HepG2 (cell line): ENCODE measurements at regions of chr11 and their contacts with region 1.

Region 1: DNA sequence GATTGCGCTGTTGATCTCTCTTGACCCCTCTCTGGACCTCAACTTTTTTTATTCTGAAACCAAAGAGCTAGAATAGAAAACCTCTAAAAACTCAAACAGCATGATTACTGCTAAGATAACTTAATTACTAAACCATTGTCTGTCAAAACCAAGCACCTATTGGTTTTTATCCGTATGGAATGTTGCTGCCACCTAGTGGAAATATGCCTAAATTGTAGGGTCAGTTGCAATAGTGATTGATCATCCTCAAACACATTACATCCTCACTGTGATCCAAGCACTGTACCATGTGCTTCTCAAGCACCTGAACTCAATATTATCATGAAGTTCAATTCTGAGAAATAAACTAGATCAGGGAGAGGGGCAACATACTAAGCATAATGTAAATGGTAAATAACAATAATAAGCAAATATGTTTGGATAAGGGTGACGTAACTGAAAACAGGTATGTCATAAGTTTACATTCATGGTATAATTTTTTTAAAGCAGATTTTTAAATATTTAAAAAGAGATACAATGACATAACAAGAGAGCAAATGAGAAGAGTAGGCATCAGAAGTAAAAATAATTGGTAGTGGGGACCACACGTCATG is 3.8 kb upstream of the OR5A2 start:
- DNase-seq: peak; percentile 53
- ATAC-seq: peak; percentile 73
- H3K4me3 ChIP-seq: no peak overlapping the region
- H3K27ac ChIP-seq: no peak overlapping the region
- H3K4me1 ChIP-seq: no peaks in the 10 kb centered on the region
- H3K27me3 ChIP-seq: no peaks in the 10 kb centered on the region
- CTCF ChIP-seq: peak; percentile 79
- EP300 ChIP-seq: no peak
- POLR2A ChIP-seq: no peak
- RAD21 ChIP-seq: no peak

Region 2: DNA sequence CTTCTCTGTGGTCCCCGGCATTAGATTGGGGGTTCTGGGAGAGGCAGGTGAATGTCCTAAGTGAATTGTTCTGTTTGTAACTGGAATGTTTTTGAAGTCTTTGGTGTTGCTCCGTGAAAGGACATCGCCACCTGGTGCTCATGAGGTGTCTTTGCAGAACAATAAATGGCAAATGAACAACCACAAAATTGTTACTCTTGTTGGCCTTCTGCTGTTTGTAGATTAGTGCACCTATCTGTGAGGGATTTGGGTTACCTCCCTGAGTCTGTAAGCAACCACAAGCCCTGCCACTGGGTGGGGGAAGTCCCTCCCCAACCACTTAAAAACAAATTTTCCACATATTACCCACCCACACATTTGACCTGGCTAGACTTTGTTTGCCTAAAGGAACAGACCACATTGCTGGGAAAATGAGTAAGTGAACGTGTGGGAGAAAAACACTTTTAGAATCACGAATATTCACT is 222.0 kb before region 1 on chr11:
- CTCF ChIA-PET with region 1: interaction called, 4 read pairs
- POLR2A ChIA-PET with region 1: no interaction called
- in situ Hi-C with region 1: loop called (anchors 5 kb)
- intact Hi-C with region 1: loop called (anchors 1 kb)
- DNase-seq: peak; percentile 48
- ATAC-seq: peak; percentile 67
- H3K4me3 ChIP-seq: no peak overlapping the region
- H3K27ac ChIP-seq: no peak overlapping the region
- H3K4me1 ChIP-seq: no peaks in the 10 kb centered on the region
- H3K27me3 ChIP-seq: no peaks in the 10 kb centered on the region
- CTCF ChIP-seq: peak; percentile 84
- EP300 ChIP-seq: no peak
- POLR2A ChIP-seq: no peak
- RAD21 ChIP-seq: peak; percentile 60

Region 3: GRCh38 chr11:59283825-59284772 is 145.9 kb before region 1 on chr11:
- CTCF ChIA-PET with region 1: no interaction called
- POLR2A ChIA-PET with region 1: no interaction called
- in situ Hi-C with region 1: no loop called
- intact Hi-C with region 1: loop called (anchors 1 kb)
- DNase-seq: peak; percentile 40
- ATAC-seq: peak; percentile 79
- H3K4me3 ChIP-seq: no peak overlapping the region
- H3K27ac ChIP-seq: no peak overlapping the region
- H3K4me1 ChIP-seq: no peaks in the 10 kb centered on the region
- H3K27me3 ChIP-seq: no peaks in the 10 kb centered on the region
- CTCF ChIP-seq: peak; percentile 78
- EP300 ChIP-seq: no peak
- POLR2A ChIP-seq: no peak
- RAD21 ChIP-seq: no peak

Region 4: GRCh38 chr11:59380263-59381059 is 49.6 kb before region 1 on chr11:
- CTCF ChIA-PET with region 1: no interaction called
- POLR2A ChIA-PET with region 1: no interaction called
- in situ Hi-C with region 1: no loop called
- intact Hi-C with region 1: no loop called
- DNase-seq: no peak
- ATAC-seq: no peak
- H3K4me3 ChIP-seq: no peak overlapping the region
- H3K27ac ChIP-seq: no peak overlapping the region
- H3K4me1 ChIP-seq: no peaks in the 10 kb centered on the region
- H3K27me3 ChIP-seq: no peaks in the 10 kb centered on the region
- CTCF ChIP-seq: no peak
- EP300 ChIP-seq: no peak
- POLR2A ChIP-seq: no peak
- RAD21 ChIP-seq: no peak